ENCODE measurements at regions of chr4 and their contacts with region 1.

Region 1: DNA sequence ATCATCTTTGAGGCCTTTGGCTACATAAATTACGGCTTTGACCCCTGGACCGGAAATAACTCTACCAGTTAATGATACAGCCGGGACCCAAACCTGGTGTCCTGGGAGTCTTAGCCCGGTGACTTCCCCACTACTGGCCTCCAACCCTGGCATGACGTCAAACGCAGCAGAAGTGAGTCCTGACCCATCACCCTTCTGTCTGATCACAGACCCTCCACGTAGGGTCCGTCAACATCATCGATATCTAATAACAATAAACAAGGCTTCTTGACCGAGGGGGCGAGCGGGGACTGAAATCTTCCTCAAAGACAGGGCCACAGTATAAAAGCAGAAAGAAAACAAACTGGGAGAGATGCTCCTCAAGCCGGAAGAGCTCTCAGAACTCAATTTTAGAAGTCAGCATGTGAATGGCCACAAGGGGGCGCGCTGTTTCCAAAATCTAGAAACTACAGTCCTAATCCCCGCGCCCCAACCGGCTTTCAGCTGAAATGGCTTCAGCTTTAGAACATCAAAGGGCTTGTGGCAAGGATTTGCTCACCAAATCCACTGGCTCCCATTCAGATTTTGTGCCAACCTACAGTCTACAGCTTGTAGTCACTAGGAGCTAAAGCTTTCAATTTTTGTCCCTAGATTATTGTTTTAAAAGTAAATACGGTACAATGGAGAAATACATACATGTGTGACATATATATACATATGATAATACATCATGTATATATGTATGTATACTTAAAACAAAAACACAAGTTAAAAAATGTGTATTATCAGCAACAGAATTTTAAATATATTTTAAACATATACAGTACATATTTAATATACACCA is 46.4 kb upstream of the ENPP6 start:
- DNase-seq: peak; percentile 83 to 97 (median 93)
- ATAC-seq: peak; percentile 57
- H3K4me3 ChIP-seq: no peak overlapping the region
- H3K4me3 Mint-ChIP-seq: no peak overlapping the region
- H3K27ac ChIP-seq: no peak overlapping the region
- H3K27ac Mint-ChIP-seq: no peak overlapping the region
- H3K4me1 ChIP-seq: peaks cover 7% of the 10 kb centered on the region
- H3K4me1 Mint-ChIP-seq: peaks cover 29% of the 10 kb centered on the region
- H3K27me3 ChIP-seq: no peaks in the 10 kb centered on the region
- H3K27me3 Mint-ChIP-seq: no peaks in the 10 kb centered on the region
- CTCF ChIP-seq: peak; percentile 73

Region 2: DNA sequence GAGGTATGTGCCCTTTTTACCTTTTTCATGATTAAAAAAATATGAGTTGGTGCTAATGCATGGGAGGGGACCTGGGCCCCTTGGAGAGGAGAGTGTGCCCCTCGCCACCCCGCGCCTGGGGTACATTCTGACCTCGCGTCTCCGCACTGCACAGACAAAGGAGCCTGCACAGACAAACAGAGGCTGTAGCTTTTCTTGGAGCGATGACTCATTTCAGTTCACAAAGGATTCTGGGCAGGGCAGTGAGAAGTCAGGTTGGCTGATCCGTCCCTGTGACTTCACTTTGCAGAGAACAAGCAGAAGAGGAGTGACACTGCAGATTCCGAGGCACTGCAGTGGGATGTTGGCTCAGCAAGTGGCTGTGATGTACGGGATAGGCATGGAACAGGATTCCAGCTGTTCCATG is 276.1 kb before region 1 on chr4:
- CTCF ChIA-PET with region 1: no interaction called
- POLR2A ChIA-PET with region 1: no interaction called
- intact Hi-C with region 1: no loop called
- DNase-seq: peak in 1 of 9 experiments; percentile 13
- ATAC-seq: no peak
- H3K4me3 ChIP-seq: no peak overlapping the region
- H3K4me3 Mint-ChIP-seq: no peak overlapping the region
- H3K27ac ChIP-seq: no peak overlapping the region
- H3K27ac Mint-ChIP-seq: no peak overlapping the region
- H3K4me1 ChIP-seq: no peaks in the 10 kb centered on the region
- H3K4me1 Mint-ChIP-seq: no peaks in the 10 kb centered on the region
- H3K27me3 ChIP-seq: no peaks in the 10 kb centered on the region
- H3K27me3 Mint-ChIP-seq: no peaks in the 10 kb centered on the region
- CTCF ChIP-seq: no peak

Region 3: DNA sequence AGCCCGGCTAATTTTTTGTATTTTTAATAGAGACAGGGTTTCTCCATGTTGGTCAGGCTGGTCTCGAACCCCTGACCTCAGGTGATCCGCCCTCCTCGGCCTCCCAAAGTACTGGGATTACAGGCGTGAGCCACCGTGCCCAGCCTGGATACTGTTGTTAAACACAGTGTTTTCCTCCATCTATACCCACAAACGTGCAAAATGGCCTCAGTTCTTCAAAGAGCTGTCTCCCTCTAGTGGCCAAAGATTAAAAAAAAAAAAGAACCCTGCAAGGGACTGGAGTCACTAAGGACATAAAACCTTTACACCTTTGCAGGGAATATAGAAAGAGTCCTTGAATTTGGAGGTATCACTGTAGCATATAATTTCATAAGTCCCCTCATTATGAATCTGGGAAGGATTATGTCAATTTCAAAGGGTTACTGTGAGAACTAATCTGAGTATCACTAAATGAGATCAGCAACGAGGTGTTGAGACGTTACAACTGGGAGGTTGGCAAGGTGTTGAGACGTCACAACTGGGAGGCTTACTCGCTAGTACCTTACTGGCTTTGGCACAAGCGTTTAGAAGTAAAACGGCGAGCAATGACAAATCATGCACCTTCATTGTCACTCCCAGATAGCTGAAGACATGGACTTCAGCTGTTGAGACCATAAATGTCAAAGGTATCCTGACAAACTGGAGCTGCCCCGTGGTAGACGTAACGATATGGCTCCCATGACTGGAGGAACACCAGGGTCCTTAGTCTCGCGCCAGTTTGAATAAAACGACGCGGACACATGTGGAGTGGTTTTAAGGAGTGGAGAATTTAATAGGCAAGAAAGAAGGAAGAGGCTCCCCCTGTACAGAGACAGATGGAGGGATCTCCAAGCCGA is 13.1 kb before region 1 on chr4:
- CTCF ChIA-PET with region 1: interaction called, 66 read pairs
- POLR2A ChIA-PET with region 1: interaction called, 3 read pairs
- intact Hi-C with region 1: no loop called
- DNase-seq: peak in 3 of 9 experiments; percentile 48 to 75 (median 67)
- ATAC-seq: peak; percentile 79
- H3K4me3 ChIP-seq: no peak overlapping the region
- H3K4me3 Mint-ChIP-seq: no peak overlapping the region
- H3K27ac ChIP-seq: no peak overlapping the region
- H3K27ac Mint-ChIP-seq: no peak overlapping the region
- H3K4me1 ChIP-seq: no peaks in the 10 kb centered on the region
- H3K4me1 Mint-ChIP-seq: peaks cover 2% of the 10 kb centered on the region
- H3K27me3 ChIP-seq: no peaks in the 10 kb centered on the region
- H3K27me3 Mint-ChIP-seq: peaks cover 6% of the 10 kb centered on the region
- CTCF ChIP-seq: peak; percentile 79

Region 4: GRCh38 chr4:184384056-184384809 is 120.1 kb after region 1 on chr4:
- CTCF ChIA-PET with region 1: interaction called, 3 read pairs
- POLR2A ChIA-PET with region 1: interaction called, 3 read pairs
- intact Hi-C with region 1: loop called (anchors 10 kb)
- DNase-seq: peak in 2 of 9 experiments; percentile 10 to 45
- ATAC-seq: peak; percentile 29
- H3K4me3 ChIP-seq: no peak overlapping the region
- H3K4me3 Mint-ChIP-seq: peak overlapping the region; percentile 41
- H3K27ac ChIP-seq: peak overlapping the region in 1 of 2 experiments; percentile 49
- H3K27ac Mint-ChIP-seq: peak overlapping the region; percentile 66
- H3K4me1 ChIP-seq: peaks cover 47% of the 10 kb centered on the region
- H3K4me1 Mint-ChIP-seq: peaks cover 58% of the 10 kb centered on the region
- H3K27me3 ChIP-seq: no peaks in the 10 kb centered on the region
- H3K27me3 Mint-ChIP-seq: no peaks in the 10 kb centered on the region
- CTCF ChIP-seq: no peak

Region 5: GRCh38 chr4:184538023-184538599 is 274.0 kb after region 1 on chr4:
- CTCF ChIA-PET with region 1: interaction called, 26 read pairs
- POLR2A ChIA-PET with region 1: interaction called, 8 read pairs
- intact Hi-C with region 1: loop called (anchors 1 kb)
- DNase-seq: peak; percentile 38 to 88 (median 65)
- ATAC-seq: peak; percentile 45
- H3K4me3 ChIP-seq: peak overlapping the region; percentile 57 to 63
- H3K4me3 Mint-ChIP-seq: peak overlapping the region; percentile 91
- H3K27ac ChIP-seq: peak overlapping the region; percentile 84 to 90
- H3K27ac Mint-ChIP-seq: peak overlapping the region; percentile 100
- H3K4me1 ChIP-seq: peaks cover 33% of the 10 kb centered on the region
- H3K4me1 Mint-ChIP-seq: peaks cover 46% of the 10 kb centered on the region
- H3K27me3 ChIP-seq: no peaks in the 10 kb centered on the region
- H3K27me3 Mint-ChIP-seq: no peaks in the 10 kb centered on the region
- CTCF ChIP-seq: peak; percentile 36

Region 6: GRCh38 chr4:184664448-184665210 is 400.5 kb after region 1 on chr4:
- CTCF ChIA-PET with region 1: no interaction called
- POLR2A ChIA-PET with region 1: no interaction called
- intact Hi-C with region 1: no loop called
- DNase-seq: no peak
- ATAC-seq: peak; percentile 30
- H3K4me3 ChIP-seq: no peak overlapping the region
- H3K4me3 Mint-ChIP-seq: no peak overlapping the region
- H3K27ac ChIP-seq: no peak overlapping the region
- H3K27ac Mint-ChIP-seq: no peak overlapping the region
- H3K4me1 ChIP-seq: peaks cover 18% of the 10 kb centered on the region
- H3K4me1 Mint-ChIP-seq: peaks cover 24% of the 10 kb centered on the region
- H3K27me3 ChIP-seq: no peaks in the 10 kb centered on the region
- H3K27me3 Mint-ChIP-seq: no peaks in the 10 kb centered on the region
- CTCF ChIP-seq: no peak

Region 7: DNA sequence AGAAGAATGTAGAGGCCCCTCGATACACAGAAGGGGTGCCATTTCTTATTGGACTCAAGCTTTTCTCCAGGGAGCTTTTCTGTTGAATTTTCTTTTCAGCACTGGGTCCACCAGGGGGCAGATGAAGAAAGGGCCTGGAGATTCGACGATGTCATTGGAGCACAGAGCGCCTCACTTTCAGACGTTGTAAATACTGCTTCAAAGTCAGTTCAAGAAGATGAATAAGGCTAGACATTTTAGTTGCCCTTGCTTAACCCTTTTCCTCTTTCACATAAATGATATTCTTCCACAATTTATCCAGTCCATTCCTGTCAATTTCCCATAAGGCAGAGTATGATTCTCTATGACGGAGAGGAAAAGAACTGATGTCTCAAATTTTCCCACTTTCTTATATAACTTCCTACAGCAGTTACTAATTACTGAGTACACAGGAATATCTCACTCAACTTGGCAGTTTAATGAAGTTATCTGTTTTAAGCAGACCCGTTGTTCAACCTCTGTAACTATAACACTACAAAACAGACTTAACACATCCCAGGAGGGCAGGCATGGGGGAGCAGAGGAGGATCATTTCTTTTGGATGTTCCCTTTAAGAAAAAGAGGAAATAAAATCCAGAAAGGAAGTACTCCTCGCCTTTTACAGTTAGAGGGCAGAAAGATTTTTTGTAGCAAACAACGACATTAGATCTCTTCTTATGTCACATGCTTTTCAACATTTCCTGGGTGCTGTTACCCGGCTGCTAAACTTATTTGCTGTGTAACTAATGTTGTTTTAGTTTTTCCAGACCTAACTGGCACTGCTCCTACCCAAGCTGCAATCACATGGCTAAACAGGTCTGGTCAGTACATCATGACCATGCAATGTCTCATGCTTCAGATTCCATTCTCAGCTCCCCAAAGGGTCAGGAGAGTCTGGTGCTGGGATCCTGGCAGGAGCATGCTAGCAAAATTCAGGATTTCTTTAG is 482.0 kb after region 1 on chr4:
- CTCF ChIA-PET with region 1: interaction called, 6 read pairs
- POLR2A ChIA-PET with region 1: no interaction called
- intact Hi-C with region 1: loop called in 1 of 2 experiments (anchors 5 kb)
- DNase-seq: peak; percentile 31 to 81 (median 74)
- ATAC-seq: peak; percentile 97
- H3K4me3 ChIP-seq: no peak overlapping the region
- H3K4me3 Mint-ChIP-seq: peak overlapping the region; percentile 53
- H3K27ac ChIP-seq: no peak overlapping the region
- H3K27ac Mint-ChIP-seq: peak overlapping the region; percentile 78
- H3K4me1 ChIP-seq: peaks cover 8% of the 10 kb centered on the region
- H3K4me1 Mint-ChIP-seq: peaks cover 16% of the 10 kb centered on the region
- H3K27me3 ChIP-seq: no peaks in the 10 kb centered on the region
- H3K27me3 Mint-ChIP-seq: peaks cover 3% of the 10 kb centered on the region
- CTCF ChIP-seq: peak; percentile 68

Region 8: DNA sequence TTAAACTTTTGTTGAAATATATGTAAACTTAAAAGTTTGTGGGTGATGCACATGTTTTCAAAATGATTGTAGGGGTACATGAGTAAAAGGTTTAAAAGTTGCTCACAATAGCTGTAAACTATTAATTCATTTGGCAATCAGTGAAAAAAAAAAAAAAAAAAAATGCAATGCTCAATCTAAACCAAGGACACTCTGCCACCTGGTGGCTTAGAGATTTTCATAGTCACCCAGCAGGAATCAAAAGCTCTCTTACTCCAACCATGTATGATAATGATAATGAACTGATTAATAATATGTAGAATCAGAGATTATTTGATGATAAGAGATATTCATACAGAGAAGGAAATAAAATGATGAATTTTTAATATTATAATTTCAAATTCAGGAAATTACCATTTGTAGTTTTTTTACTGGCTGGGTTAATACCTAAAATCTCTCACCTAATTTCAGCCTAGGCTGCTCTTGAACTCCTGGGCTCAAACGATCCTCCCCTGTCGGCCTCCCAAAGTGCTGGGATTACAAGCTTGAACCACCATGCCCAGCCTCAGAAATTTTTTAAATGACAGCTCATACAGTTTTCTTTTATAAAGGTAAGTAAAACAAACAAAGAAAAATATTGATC is 832.0 kb after region 1 on chr4:
- CTCF ChIA-PET with region 1: interaction called, 3 read pairs
- POLR2A ChIA-PET with region 1: no interaction called
- intact Hi-C with region 1: loop called (anchors 1 to 2 kb)
- DNase-seq: peak in 5 of 9 experiments; percentile 20 to 48 (median 24)
- ATAC-seq: no peak
- H3K4me3 ChIP-seq: no peak overlapping the region
- H3K4me3 Mint-ChIP-seq: no peak overlapping the region
- H3K27ac ChIP-seq: no peak overlapping the region
- H3K27ac Mint-ChIP-seq: no peak overlapping the region
- H3K4me1 ChIP-seq: no peaks in the 10 kb centered on the region
- H3K4me1 Mint-ChIP-seq: no peaks in the 10 kb centered on the region
- H3K27me3 ChIP-seq: peaks cover 0 to 2% of the 10 kb centered on the region in 2 experiments
- H3K27me3 Mint-ChIP-seq: peaks cover 17% of the 10 kb centered on the region
- CTCF ChIP-seq: peak; percentile 59

Region 9: DNA sequence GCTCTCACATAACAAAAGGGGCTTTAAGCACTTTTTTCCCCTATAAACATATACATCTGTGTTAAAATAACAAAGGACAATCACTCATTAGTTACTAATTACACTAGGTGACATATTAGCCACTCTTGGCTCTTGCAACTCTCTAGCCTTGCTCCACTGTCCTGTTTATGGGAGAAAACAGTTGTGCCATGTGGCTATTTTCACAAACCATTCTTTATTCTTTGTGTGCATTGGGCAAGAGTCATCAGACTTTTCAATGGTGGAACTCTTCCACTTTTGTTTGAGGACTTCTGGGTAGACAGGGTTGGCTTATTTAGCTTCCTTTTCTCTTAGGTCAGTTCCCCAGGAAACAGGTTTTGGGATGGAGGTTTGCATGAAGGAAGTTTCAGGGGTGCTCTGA is 1824.4 kb after region 1 on chr4:
- CTCF ChIA-PET with region 1: no interaction called
- POLR2A ChIA-PET with region 1: no interaction called
- intact Hi-C with region 1: no loop called
- DNase-seq: no peak
- ATAC-seq: no peak
- H3K4me3 ChIP-seq: no peak overlapping the region
- H3K4me3 Mint-ChIP-seq: no peak overlapping the region
- H3K27ac ChIP-seq: no peak overlapping the region
- H3K27ac Mint-ChIP-seq: no peak overlapping the region
- H3K4me1 ChIP-seq: no peaks in the 10 kb centered on the region
- H3K4me1 Mint-ChIP-seq: no peaks in the 10 kb centered on the region
- H3K27me3 ChIP-seq: no peaks in the 10 kb centered on the region
- H3K27me3 Mint-ChIP-seq: peaks cover 5% of the 10 kb centered on the region
- CTCF ChIP-seq: no peak